Colonic mucosa (tissue), 4 donors: ENCODE measurements at regions of chr3 and their contacts with region 1.

Region 1: GRCh38 chr3:71069797-71070196 is 513.7 kb downstream of the FOXP1 start:
- DNase-seq: peak; percentile 85
- H3K4me3 ChIP-seq: no peak overlapping the region
- H3K27ac ChIP-seq: no peak overlapping the region
- H3K4me1 ChIP-seq: peaks cover 6% of the 10 kb centered on the region
- H3K27me3 ChIP-seq: no peaks in the 10 kb centered on the region
- CTCF ChIP-seq: peak; percentile 40

Region 2: DNA sequence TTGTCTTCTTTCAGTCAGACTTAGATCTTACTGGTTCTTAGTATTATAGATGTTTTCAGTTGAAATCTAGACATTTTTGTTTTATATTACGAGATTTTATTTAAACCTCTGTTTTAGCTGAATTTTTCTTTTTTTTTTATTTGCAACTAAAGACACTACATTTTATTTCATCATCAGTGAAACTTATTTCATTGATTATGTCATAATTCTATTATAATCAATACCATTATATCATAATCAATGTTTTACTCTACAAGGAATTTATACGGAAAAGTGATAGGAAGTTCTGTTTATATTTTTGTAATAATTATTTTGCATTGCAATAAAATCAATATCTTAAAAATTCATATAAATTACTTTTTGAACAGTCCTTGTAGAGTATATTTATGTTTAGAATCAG is 279.9 kb before region 1 on chr3:
- intact Hi-C with region 1: no loop called
- DNase-seq: no peak
- H3K4me3 ChIP-seq: no peak overlapping the region
- H3K27ac ChIP-seq: no peak overlapping the region
- H3K4me1 ChIP-seq: no peaks in the 10 kb centered on the region
- H3K27me3 ChIP-seq: no peaks in the 10 kb centered on the region
- CTCF ChIP-seq: no peak

Region 3: GRCh38 chr3:71006810-71007785 is 62.7 kb before region 1 on chr3:
- intact Hi-C with region 1: loop called (anchors 5 kb)
- DNase-seq: no peak
- H3K4me3 ChIP-seq: no peak overlapping the region
- H3K27ac ChIP-seq: peak overlapping the region; percentile 30
- H3K4me1 ChIP-seq: no peaks in the 10 kb centered on the region
- H3K27me3 ChIP-seq: no peaks in the 10 kb centered on the region
- CTCF ChIP-seq: peak; percentile 48

Region 4: GRCh38 chr3:71130471-71131374 is 60.9 kb after region 1 on chr3:
- intact Hi-C with region 1: loop called (anchors 5 kb)
- DNase-seq: peak; percentile 82
- H3K4me3 ChIP-seq: peak overlapping the region; percentile 39
- H3K27ac ChIP-seq: peak overlapping the region; percentile 88
- H3K4me1 ChIP-seq: peaks cover 10% of the 10 kb centered on the region
- H3K27me3 ChIP-seq: no peaks in the 10 kb centered on the region
- CTCF ChIP-seq: no peak